ENCODE measurements at regions of chrX and their contacts with region 1.

Region 1: DNA sequence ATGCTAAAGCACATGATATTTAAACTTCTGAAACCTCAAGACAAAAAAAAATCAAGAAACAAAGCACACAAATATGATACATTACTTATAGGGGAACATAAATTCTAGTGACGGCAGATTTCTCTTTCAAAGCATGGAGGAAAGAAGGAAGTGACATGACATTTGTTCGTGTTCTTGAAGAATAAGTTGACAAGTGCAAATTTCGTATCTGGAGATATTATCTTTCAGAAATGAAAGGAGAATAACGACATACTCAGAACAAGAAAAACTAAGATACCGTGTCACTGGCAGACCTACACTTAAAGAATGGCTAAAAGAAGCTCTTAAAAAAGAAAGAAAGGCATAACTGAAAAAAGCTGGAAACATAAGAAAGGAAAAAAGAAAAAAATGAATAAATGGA is 16.6 kb downstream of the CENPVL2 start:
- DNase-seq: no peak
- ATAC-seq: no peak
- H3K4me3 ChIP-seq: no peak overlapping the region
- H3K27ac ChIP-seq: no peak overlapping the region
- H3K4me1 ChIP-seq: no peaks in the 10 kb centered on the region
- H3K27me3 ChIP-seq: peaks cover 2% of the 10 kb centered on the region
- CTCF ChIP-seq: no peak

Region 2: DNA sequence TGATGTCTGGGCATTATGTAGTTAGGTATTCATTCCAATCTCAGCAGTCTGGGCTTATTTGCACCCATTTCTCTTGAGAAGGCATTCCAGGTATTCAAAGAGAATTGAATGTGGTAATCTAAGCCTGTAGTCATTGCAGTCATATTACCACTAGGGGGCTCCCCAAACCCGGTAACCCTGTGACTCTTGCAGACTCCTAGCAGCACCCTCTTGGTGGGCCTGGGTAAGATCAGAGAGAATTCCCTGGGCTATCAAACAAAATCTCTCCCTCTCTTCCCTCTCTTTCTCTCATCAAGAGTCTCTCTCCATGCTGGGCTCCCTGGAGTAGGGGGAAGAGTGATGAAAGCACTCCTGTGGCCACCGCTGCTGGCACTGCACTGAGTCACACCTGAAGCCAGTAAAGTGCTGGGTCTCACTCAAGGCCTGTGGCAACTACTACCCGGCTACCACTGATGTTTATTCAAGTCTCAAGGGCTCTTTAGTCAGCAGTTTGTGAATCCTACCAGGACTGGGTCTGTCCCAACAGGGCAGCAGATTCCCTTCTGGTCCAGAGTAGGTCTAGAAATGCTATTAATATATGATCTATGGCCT is 521.0 kb before region 1 on chrX:
- CTCF ChIA-PET with region 1: no interaction called
- POLR2A ChIA-PET with region 1: no interaction called
- in situ Hi-C with region 1: no loop called
- intact Hi-C with region 1: no loop called
- DNase-seq: peak; percentile 18
- ATAC-seq: no peak; the same call in 1 of the 2 replicates
- H3K4me3 ChIP-seq: no peak overlapping the region
- H3K27ac ChIP-seq: no peak overlapping the region
- H3K4me1 ChIP-seq: no peaks in the 10 kb centered on the region
- H3K27me3 ChIP-seq: no peaks in the 10 kb centered on the region
- CTCF ChIP-seq: peak; percentile 79

Region 3: DNA sequence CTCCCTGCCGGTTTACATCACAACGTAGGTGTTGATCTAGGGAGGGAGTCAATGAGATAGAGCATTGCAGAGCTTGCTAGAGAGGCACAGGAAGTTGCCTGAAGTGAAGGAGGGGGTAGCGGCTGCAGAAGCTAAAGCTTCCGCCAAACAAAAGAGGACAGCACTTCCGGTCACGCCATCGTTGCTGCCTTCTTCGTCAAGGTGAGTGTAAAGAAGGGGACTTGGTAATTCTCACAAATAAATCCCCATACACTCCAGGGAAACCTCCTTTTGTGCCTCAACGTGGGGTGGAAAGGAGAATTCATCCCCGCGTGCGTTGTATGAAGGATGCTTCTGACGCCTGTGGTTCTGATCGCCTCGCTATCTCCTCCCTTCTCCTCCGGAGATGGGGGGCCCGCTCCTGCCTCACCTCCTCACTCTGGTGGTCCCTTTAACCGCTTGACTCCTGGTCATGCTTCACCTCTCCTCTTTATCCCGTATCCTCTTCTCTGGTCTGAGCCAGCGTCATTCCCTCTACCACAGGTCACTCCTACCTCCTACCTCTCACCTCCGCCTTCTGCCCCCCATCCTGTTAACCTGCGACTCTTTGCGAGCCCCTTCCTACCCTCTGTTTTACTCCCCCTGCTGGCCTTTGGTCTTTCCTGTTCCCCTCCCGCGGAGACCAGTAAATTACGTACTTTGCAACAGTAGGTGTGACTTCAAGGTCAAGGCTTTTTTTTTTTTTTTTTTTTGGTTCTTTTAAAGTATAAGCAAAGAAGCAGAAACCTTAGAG is 137.1 kb after region 1 on chrX:
- CTCF ChIA-PET with region 1: no interaction called
- POLR2A ChIA-PET with region 1: interaction called, 10 read pairs
- in situ Hi-C with region 1: no loop called
- intact Hi-C with region 1: no loop called
- DNase-seq: peak; percentile 33
- ATAC-seq: peak; percentile 99
- H3K4me3 ChIP-seq: peak overlapping the region; percentile 75 to 86
- H3K27ac ChIP-seq: peak overlapping the region; percentile 80
- H3K4me1 ChIP-seq: peaks cover 6% of the 10 kb centered on the region
- H3K27me3 ChIP-seq: no peaks in the 10 kb centered on the region
- CTCF ChIP-seq: peak; percentile 38

Measured in Panc1 (cell line).